ENCODE measurements at regions of chr4 and their contacts with region 1.

Region 1: GRCh38 chr4:83356899-83357661 is 22.4 kb upstream of the HPSE start:
- DNase-seq: peak; percentile 63
- H3K4me3 Mint-ChIP-seq: no peak overlapping the region
- H3K27ac Mint-ChIP-seq: peak overlapping the region; percentile 62
- H3K4me1 Mint-ChIP-seq: peaks cover 15% of the 10 kb centered on the region
- H3K27me3 Mint-ChIP-seq: no peaks in the 10 kb centered on the region

Region 2: GRCh38 chr4:81494031-81494431 is 1863.0 kb before region 1 on chr4:
- CTCF ChIA-PET with region 1: no interaction called
- intact Hi-C with region 1: loop called (anchors 10 kb)
- DNase-seq: no peak
- H3K4me3 Mint-ChIP-seq: no peak overlapping the region
- H3K27ac Mint-ChIP-seq: peak overlapping the region; percentile 30
- H3K4me1 Mint-ChIP-seq: peaks cover 46% of the 10 kb centered on the region
- H3K27me3 Mint-ChIP-seq: no peaks in the 10 kb centered on the region

Region 3: GRCh38 chr4:82373816-82374625 is 983.1 kb before region 1 on chr4 and contains the start of gene HNRNPD:
- CTCF ChIA-PET with region 1: no interaction called
- intact Hi-C with region 1: loop called (anchors 10 kb)
- DNase-seq: peak; percentile 96
- H3K4me3 Mint-ChIP-seq: peak within 1 kb of the TSS; percentile 95
- H3K27ac Mint-ChIP-seq: peak within 1 kb of the TSS; percentile 95
- H3K4me1 Mint-ChIP-seq: peaks cover 33% of the 10 kb centered on the region
- H3K27me3 Mint-ChIP-seq: no peaks in the 10 kb centered on the region
- total RNA-seq, gene HNRNPD: 340 to 367 TPM

Region 4: GRCh38 chr4:83231620-83232076 is 125.4 kb before region 1 on chr4:
- CTCF ChIA-PET with region 1: no interaction called
- intact Hi-C with region 1: loop called (anchors 1 kb)
- DNase-seq: peak; percentile 68
- H3K4me3 Mint-ChIP-seq: no peak overlapping the region
- H3K27ac Mint-ChIP-seq: peak overlapping the region; percentile 16
- H3K4me1 Mint-ChIP-seq: peaks cover 46% of the 10 kb centered on the region
- H3K27me3 Mint-ChIP-seq: peaks cover 3% of the 10 kb centered on the region

Region 5: GRCh38 chr4:83535520-83536361 is 178.7 kb after region 1 on chr4 and contains the start of gene GPAT3:
- CTCF ChIA-PET with region 1: no interaction called
- intact Hi-C with region 1: loop called (anchors 5 kb)
- DNase-seq: peak; percentile 83
- H3K4me3 Mint-ChIP-seq: peak within 1 kb of the TSS; percentile 73
- H3K27ac Mint-ChIP-seq: peak within 1 kb of the TSS; percentile 15
- H3K4me1 Mint-ChIP-seq: peaks cover 14% of the 10 kb centered on the region
- H3K27me3 Mint-ChIP-seq: peaks cover 2% of the 10 kb centered on the region
- total RNA-seq, gene GPAT3: 2.0 to 3.1 TPM

Region 6: DNA sequence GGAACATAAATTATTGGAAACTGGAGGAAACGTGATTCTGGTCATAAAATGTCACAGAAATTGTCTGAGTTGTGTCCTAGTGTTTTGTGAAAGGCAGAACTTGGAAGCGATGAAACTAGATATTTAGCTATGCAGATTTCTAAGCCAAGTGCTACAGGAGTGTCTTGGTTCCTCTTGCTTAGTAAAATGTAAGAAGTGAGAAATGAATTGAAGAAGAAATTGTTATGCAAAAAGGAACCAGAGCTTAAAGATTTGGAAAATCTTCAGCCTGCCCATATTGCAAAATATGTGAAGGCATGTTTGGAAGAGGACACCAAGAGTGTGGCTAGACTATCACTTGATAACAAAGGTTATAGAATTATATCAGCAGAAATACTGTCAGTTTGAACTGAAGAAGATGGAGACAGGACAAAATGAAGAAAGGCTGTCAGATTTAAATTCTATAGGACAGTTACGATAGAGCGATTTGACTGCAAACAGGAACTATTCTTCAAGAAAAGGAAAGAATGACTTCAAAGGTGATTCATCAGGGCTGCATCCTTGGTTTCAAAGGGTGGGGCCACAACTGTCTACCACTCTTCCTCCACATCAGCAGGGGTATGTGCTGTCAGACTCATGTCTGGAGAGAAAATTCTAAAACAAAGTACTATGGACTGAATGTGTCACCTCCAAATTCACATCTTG is 1216.4 kb after region 1 on chr4:
- CTCF ChIA-PET with region 1: no interaction called
- intact Hi-C with region 1: no loop called
- DNase-seq: peak; percentile 29
- H3K4me3 Mint-ChIP-seq: no peak overlapping the region
- H3K27ac Mint-ChIP-seq: no peak overlapping the region
- H3K4me1 Mint-ChIP-seq: peaks cover 18% of the 10 kb centered on the region
- H3K27me3 Mint-ChIP-seq: peaks cover 8% of the 10 kb centered on the region

Measured in activated naive CD4-positive, alpha-beta T cell treated with anti-CD3 and anti-CD28 coated beads for 36 hours (primary cell).